Mammary epithelial cell (primary cell): ENCODE measurements at regions of chr1 and their contacts with region 1.

Region 1: DNA sequence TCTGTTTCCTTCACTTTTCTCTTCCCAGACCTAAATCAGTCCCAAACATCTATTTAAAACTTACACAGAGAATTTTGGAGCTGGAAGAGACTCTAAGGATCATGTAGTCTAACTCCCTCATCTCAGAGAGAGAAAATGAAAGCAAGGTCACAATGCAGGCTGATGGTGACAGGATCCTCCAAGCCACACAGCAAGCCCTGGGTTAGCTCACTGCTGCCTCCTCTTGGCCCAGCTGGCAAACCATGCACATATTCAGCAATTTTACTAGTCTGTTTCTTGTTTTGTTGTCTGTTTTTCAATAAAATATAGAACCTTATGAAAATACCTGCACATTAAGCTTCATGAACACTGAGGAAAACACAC is 27.7 kb upstream of the LY9 start:
- DNase-seq: peak; percentile 40
- H3K4me3 ChIP-seq: no peak overlapping the region
- H3K27ac ChIP-seq: peak overlapping the region; percentile 33
- H3K4me1 ChIP-seq: peaks cover 13% of the 10 kb centered on the region
- H3K27me3 ChIP-seq: no peaks in the 10 kb centered on the region
- CTCF ChIP-seq: peak; percentile 75 to 88

Region 2: GRCh38 chr1:160675641-160676410 is 92.5 kb before region 1 on chr1:
- CTCF ChIA-PET with region 1: no interaction called
- dilution Hi-C with region 1: no loop called
- in situ Hi-C with region 1: no loop called
- intact Hi-C with region 1: loop called (anchors 1 kb)
- DNase-seq: peak; percentile 41
- H3K4me3 ChIP-seq: no peak overlapping the region
- H3K27ac ChIP-seq: no peak overlapping the region
- H3K4me1 ChIP-seq: no peaks in the 10 kb centered on the region
- H3K27me3 ChIP-seq: peaks cover 6% of the 10 kb centered on the region
- CTCF ChIP-seq: peak; percentile 87 to 93

Region 3: DNA sequence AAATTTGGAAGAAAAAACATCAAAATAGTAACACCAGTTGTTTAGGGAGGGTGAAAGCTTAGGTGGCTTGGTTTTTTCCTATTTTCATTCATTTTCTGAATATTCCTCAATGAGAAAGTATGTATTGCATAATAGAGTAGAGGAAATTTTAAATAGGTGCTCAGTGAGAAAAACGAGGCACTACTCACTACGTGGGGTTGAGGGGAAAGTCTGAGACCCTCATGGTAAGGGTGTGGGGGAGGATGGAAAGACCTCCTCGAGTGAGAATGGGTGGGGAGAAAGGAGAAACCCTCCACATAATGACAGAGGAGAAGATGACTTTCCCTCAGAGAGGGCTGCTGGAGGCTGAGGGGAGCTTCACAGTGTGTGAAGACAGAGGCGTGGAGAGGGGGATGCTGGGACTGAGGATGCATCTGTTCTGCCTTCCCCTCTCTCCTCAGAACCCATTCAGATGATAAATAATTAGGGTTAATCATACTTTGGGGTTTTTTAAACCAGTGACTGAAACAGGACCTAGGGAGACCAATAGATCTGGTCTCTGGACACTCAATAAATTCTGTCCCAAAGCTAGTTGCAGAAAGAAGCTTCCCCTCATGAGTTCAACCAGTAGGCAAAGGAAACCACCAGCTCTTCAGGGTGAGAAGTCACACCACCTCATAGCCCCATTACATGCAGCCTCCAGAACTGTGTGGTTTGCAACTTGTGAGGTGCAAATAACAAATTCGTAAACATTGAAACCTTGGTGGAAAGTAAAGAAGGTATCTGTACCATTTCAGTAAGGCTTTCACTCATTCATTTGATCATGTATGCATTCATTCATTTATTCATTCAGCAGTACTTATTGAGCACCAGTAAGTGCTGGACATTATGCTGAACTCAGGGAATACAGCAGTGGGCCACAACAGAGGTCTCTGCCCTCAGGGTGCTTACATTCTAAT is 12.1 kb before region 1 on chr1:
- CTCF ChIA-PET with region 1: no interaction called
- dilution Hi-C with region 1: no loop called
- in situ Hi-C with region 1: no loop called
- intact Hi-C with region 1: no loop called
- DNase-seq: no peak
- H3K4me3 ChIP-seq: no peak overlapping the region
- H3K27ac ChIP-seq: no peak overlapping the region
- H3K4me1 ChIP-seq: no peaks in the 10 kb centered on the region
- H3K27me3 ChIP-seq: no peaks in the 10 kb centered on the region
- CTCF ChIP-seq: no peak

Region 4: GRCh38 chr1:160789702-160790611 is 21.7 kb after region 1 on chr1:
- CTCF ChIA-PET with region 1: no interaction called
- dilution Hi-C with region 1: no loop called
- in situ Hi-C with region 1: no loop called
- intact Hi-C with region 1: no loop called
- DNase-seq: no peak
- H3K4me3 ChIP-seq: no peak overlapping the region
- H3K27ac ChIP-seq: no peak overlapping the region
- H3K4me1 ChIP-seq: no peaks in the 10 kb centered on the region
- H3K27me3 ChIP-seq: no peaks in the 10 kb centered on the region
- CTCF ChIP-seq: no peak